ENCODE measurements at regions of chr2 and their contacts with region 1.

Region 1: DNA sequence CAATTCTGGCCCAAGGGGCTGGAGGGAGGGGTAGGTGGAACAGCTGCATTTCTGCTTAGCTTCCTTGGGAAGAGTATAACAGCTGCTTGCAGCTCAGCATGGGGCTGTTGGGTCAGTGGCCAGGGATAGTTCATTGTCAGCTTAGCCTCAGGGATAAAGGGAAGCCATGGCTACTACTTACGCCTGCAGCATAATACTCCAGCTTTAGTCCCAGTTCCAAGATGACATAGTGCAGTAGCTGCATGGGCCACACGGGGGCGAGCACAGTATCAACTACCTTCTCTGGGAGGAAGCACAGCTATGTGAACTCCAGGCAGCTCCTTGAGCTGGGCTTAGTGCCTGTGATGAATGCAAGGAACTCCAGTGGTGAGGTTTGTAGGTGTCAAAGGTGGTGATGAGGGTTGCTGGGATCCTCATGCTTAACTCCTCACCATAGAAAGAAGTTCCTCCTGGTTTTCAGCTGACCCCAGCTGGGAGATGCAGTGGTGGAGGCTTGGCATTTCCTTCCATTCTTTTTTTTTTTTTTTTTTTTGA is 35.4 kb upstream of the RHOB start:
- DNase-seq: peak; percentile 78 to 84 (median 81)
- H3K4me3 ChIP-seq: no peak overlapping the region
- H3K4me3 Mint-ChIP-seq: no peak overlapping the region
- H3K27ac ChIP-seq: no peak overlapping the region
- H3K27ac Mint-ChIP-seq: peak overlapping the region in 1 of 7 donors; percentile 63
- H3K4me1 ChIP-seq: peaks cover 15 to 20% of the 10 kb centered on the region in 2 donors
- H3K4me1 Mint-ChIP-seq: peaks cover 27% of the 10 kb centered on the region
- H3K27me3 ChIP-seq: no peaks in the 10 kb centered on the region
- H3K27me3 Mint-ChIP-seq: peaks cover 0 to 4% (median 0%) of the 10 kb centered on the region in 3 donors
- CTCF ChIP-seq: peak; percentile 81

Region 2: DNA sequence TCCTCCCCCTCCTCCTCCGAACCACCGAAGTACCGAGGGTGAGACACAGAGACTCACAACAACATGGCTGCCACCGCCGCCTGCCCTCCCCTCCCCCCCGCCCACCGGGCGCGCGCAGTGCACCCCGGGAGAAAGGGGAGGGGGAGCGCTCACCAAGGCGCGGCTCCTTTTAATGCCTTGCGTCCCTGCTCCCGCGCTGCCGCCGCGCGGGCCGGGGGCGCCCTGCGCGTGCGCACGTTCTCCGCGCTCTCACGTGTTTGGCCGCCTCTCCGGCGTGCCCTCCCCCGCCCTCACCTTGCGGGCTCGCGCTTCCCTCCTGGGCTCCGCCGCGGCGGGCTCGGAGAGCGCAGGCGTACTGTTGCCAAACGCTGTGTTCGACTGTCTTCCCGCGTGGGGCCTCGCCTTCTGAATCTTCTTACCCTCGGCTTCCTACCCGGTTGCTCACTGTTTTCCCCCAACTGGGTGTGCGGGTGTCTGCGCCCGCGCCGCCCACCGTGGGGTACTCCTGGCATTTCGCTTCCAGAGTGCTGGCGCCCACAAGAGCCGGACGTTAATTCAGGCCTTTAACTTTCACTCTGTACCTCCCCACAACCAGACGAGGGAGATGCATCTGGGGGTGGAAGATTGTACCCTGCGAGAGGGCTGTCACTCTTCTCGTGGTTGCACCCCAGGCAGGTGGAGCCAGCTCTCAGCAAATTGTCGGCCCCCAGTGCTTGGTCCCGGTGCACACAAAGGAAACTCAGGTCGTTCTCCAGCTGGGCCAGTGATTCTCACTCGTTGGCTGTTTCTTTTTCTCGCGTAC is 60.5 kb before region 1 on chr2 and contains the start of gene PUM2:
- intact Hi-C with region 1: no loop called
- DNase-seq: peak; percentile 94 to 96 (median 95)
- H3K4me3 ChIP-seq: peak within 1 kb of the TSS; percentile 85 to 98 (median 88)
- H3K4me3 Mint-ChIP-seq: peak within 1 kb of the TSS; percentile 89 to 94
- H3K27ac ChIP-seq: peak within 1 kb of the TSS; percentile 90 to 92
- H3K27ac Mint-ChIP-seq: peak within 1 kb of the TSS in 6 of 7 donors; percentile 82 to 94 (median 90)
- H3K4me1 ChIP-seq: peaks cover 32 to 33% of the 10 kb centered on the region in 2 donors
- H3K4me1 Mint-ChIP-seq: peaks cover 29% of the 10 kb centered on the region
- H3K27me3 ChIP-seq: no peaks in the 10 kb centered on the region
- H3K27me3 Mint-ChIP-seq: peaks cover 0 to 3% (median 2%) of the 10 kb centered on the region in 3 donors
- CTCF ChIP-seq: no peak
- polyA plus RNA-seq, gene PUM2: 7.2 to 22.4 (median 8.3) TPM

Region 3: DNA sequence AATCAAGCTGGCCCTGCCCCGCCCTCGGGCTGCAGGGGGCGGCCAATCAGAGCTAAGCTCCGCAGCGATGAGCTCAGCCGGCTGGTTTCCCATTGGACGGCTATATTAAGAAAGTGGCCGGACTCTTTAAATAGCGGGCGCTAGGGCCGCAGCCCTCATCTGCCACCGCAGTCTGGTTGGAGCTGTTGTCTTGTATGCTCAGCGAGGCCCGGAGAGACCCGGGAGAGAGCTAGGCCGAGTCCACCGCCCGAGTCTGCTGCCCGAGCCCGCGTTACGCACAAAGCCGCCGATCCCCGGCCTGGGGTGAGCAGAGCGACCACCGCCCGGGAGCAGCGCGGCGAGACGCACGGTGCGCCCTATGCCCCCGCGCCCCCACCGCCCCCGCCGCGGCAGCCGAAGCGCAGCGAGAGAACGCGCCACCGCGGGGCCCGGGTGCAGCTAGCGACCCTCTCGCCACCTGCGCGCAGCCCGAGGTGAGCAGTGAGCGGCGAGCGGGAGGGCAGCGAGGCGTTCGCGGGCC is 35.5 kb after region 1 on chr2 and contains the start of gene RHOB:
- intact Hi-C with region 1: loop called (anchors 5 kb)
- DNase-seq: peak; percentile 98 to 100 (median 98)
- H3K4me3 ChIP-seq: peak within 1 kb of the TSS; percentile 75 to 93 (median 91)
- H3K4me3 Mint-ChIP-seq: peak within 1 kb of the TSS; percentile 95 to 96
- H3K27ac ChIP-seq: peak within 1 kb of the TSS; percentile 63 to 81
- H3K27ac Mint-ChIP-seq: peak within 1 kb of the TSS; percentile 84 to 98 (median 95)
- H3K4me1 ChIP-seq: peaks cover 18 to 34% of the 10 kb centered on the region in 2 donors
- H3K4me1 Mint-ChIP-seq: peaks cover 33% of the 10 kb centered on the region
- H3K27me3 ChIP-seq: peaks cover 0 to 9% of the 10 kb centered on the region in 2 donors
- H3K27me3 Mint-ChIP-seq: peaks cover 15 to 36% (median 36%) of the 10 kb centered on the region in 3 donors
- CTCF ChIP-seq: no peak
- polyA plus RNA-seq, gene RHOB: 43.3 to 602 (median 66.3) TPM

Region 4: DNA sequence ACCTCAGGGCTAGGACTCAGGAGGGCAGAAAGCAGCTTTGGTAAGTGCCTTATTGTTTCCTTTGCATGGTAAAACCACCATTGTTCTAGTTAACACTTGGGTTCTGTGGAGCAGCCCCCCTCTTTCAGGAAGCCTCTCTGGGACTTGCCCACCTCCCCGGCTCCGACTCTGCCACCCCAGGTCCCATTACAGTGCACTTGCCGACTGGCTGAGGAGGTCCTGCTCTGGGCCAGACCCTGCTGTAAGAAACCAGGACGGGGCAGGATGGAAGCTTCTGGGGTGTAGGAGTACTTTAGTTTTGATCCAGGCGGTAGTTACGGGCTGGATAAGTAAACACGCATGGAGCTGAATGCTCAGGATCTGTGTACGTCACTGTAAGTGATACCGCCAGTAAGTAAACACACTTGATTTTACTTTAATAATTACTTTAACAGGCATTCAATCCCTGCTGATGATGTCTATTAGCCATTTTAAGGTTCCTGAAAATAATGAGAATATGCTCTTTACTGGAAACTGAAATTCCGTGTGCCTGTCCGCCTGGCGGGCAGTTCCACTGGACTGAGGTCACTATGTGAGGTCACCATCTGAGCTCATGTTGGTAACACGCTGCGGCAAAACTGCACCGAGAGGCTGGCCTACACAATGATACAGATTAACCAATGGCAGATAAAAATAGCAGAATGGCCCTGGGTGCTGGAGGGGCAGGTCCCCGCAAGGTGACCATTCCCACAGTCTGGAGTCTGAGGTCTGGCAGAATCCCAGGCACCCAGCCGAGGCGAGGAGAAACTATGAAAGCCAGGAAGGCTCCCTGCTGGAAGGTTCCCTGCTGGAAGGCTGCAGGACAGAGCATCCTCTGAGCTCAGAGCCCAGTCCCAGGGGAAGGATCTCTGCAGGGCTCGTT is 214.3 kb after region 1 on chr2:
- intact Hi-C with region 1: no loop called
- DNase-seq: no peak
- H3K4me3 ChIP-seq: no peak overlapping the region
- H3K4me3 Mint-ChIP-seq: no peak overlapping the region
- H3K27ac ChIP-seq: no peak overlapping the region
- H3K27ac Mint-ChIP-seq: peak overlapping the region in 3 of 7 donors; percentile 3 to 42 (median 19)
- H3K4me1 ChIP-seq: no peaks in the 10 kb centered on the region
- H3K4me1 Mint-ChIP-seq: no peaks in the 10 kb centered on the region
- H3K27me3 ChIP-seq: no peaks in the 10 kb centered on the region
- H3K27me3 Mint-ChIP-seq: peaks cover 0 to 1% (median 1%) of the 10 kb centered on the region in 3 donors
- CTCF ChIP-seq: no peak

Measured in CD14-positive monocyte (primary cell).